A549 (cell line): ENCODE measurements at regions of chr2 and their contacts with region 1.

Region 1: DNA sequence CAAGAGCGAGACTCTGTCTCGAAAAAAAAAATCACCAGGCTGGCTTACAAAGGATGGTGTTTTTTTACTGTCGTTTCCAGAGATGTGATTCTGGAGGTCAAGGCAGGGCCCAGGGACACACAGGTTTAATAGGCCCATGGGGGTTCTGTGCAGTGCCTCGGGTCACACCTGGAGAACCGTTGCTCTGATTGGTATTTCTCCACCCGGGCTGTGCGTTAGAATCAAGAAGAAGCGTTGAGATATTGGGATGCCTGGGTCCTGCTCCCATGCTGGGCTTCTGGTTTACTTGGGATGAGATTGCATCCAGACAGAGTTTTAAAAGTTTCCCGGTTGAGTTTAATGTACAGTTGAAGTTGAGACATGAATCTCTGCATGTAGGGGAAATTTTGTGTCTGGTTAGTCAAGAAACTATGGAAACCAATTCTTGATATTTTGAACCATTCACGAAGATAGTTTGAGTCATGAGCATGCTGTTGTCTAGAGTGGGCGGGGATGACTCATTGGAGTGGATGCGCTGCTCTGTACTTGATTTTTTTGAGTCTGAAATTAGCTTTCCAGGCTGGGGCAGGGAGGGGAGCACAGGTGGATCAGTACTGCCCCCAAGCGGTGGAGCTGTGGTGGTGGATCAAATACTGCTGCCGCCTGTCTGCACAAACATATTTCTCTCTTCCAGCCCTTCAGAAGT is 50.1 kb downstream of the GREB1 start:
- DNase-seq: peak; percentile 86 to 88
- ATAC-seq: peak; percentile 54 to 84
- H3K4me3 ChIP-seq: no peak overlapping the region
- H3K27ac ChIP-seq: peak overlapping the region; percentile 21 to 34; a peak in 4 of 6 replicates
- H3K4me1 ChIP-seq: peaks cover 21% of the 10 kb centered on the region
- CTCF ChIP-seq: peak; percentile 96
- EP300 ChIP-seq: no peak
- POLR2A ChIP-seq: no peak
- RAD21 ChIP-seq: peak; percentile 96 to 98

Region 2: GRCh38 chr2:10844097-10844496 is 739.9 kb before region 1 on chr2:
- CTCF ChIA-PET with region 1: interaction called, 10 read pairs
- POLR2A ChIA-PET with region 1: no interaction called
- DNase-seq: peak in 1 of 2 experiments; percentile 52
- ATAC-seq: peak; percentile 70 to 93; a peak in 5 of 6 replicates
- H3K4me3 ChIP-seq: no peak overlapping the region
- H3K27ac ChIP-seq: no peak overlapping the region; a peak in 1 of 6 replicates
- H3K4me1 ChIP-seq: peaks cover 9% of the 10 kb centered on the region; the same call in 1 of the 3 replicates
- CTCF ChIP-seq: no peak
- EP300 ChIP-seq: no peak
- POLR2A ChIP-seq: no peak
- RAD21 ChIP-seq: no peak

Region 3: GRCh38 chr2:11160731-11161455 is 423.1 kb before region 1 on chr2:
- CTCF ChIA-PET with region 1: interaction called, 11 read pairs
- POLR2A ChIA-PET with region 1: no interaction called
- DNase-seq: no peak
- ATAC-seq: no peak
- H3K4me3 ChIP-seq: no peak overlapping the region
- H3K27ac ChIP-seq: no peak overlapping the region
- H3K4me1 ChIP-seq: peaks cover 8% of the 10 kb centered on the region; the same call in 2 of the 3 replicates
- CTCF ChIP-seq: no peak
- EP300 ChIP-seq: no peak
- POLR2A ChIP-seq: no peak
- RAD21 ChIP-seq: no peak

Region 4: DNA sequence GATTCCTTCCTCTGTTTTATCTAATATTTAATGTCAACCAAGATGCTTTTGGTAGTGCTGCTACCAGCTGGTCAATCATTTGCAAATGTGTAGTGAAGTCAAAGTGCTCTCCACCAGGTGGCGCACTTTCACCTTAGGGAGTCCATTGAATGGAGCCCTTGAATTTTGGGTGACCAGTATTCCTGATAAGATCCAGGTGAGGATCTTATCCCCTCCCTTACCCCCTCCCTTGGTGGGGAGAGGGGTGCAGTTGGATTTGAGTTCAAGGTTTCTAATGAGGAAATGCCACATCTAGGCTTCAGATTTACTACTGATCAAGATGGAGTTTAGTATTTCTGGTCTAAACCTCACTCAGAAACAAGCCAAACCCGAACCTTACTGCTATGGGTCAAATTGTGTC is 106.0 kb before region 1 on chr2:
- CTCF ChIA-PET with region 1: interaction called, 350 read pairs
- POLR2A ChIA-PET with region 1: interaction called, 3 read pairs
- DNase-seq: peak; percentile 73 to 91
- ATAC-seq: peak; percentile 72 to 86
- H3K4me3 ChIP-seq: no peak overlapping the region
- H3K27ac ChIP-seq: no peak overlapping the region
- H3K4me1 ChIP-seq: no peaks in the 10 kb centered on the region
- CTCF ChIP-seq: peak; percentile 99
- EP300 ChIP-seq: no peak
- POLR2A ChIP-seq: no peak
- RAD21 ChIP-seq: peak; percentile 87 to 88

Region 5: DNA sequence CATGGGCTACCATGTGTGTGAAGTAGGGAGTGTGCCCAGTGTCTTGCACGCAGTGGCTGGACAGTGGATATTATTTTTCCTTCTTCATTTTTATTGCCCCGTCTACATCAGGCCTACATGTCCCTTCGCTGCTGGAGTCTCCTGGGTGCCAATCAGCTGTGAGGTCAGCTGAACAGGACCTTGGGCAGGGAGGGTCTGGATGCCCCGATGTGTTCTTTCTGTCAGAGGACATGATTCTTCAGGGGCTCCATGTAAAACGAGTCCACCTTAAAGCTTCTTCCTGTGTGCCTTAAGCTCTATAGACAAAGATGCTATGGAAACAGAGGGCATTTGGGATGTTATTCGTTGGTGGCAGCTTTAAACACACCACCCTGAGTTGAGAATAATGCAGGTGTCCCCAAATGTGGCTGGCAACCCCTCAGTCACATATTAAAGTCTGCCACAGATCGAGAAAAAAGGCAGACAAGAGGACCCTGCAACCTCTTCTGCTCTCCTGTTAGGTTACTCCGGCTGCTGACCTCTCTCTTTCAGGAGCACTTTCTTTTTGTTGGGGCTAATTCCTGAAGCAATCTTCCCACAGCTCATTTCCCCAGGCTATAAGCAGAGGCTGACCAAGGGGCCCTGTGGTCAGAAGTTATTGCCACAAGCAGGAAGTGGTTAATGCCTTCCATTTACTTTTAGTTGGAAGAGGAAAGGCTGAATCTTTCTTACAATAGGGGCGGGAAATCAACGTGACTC is 30.2 kb before region 1 on chr2:
- CTCF ChIA-PET with region 1: interaction called, 261 read pairs
- POLR2A ChIA-PET with region 1: no interaction called
- DNase-seq: no peak
- ATAC-seq: no peak
- H3K4me3 ChIP-seq: no peak overlapping the region
- H3K27ac ChIP-seq: no peak overlapping the region
- H3K4me1 ChIP-seq: no peaks in the 10 kb centered on the region
- CTCF ChIP-seq: no peak
- EP300 ChIP-seq: no peak
- POLR2A ChIP-seq: no peak
- RAD21 ChIP-seq: no peak

Region 6: DNA sequence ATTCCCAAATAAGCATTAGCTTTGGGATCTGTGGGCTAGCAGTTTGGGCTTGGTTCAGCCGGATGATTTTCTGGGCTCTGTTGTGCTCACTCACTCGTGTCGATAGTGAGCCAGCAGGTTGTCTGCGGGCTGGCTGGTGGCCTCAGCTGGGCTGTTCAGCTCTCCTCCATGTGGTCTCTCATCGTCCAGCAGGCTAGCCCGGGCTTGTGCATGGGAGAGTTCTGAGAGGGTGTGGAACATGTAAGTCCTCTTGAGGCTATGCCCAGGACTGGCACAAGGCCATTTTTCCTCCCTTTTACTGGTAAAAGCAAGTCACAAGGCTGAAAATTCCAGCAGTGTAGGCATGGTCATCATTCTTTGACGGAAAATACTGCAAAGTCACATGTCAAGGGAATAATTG is 47.5 kb after region 1 on chr2:
- CTCF ChIA-PET with region 1: interaction called, 20 read pairs
- POLR2A ChIA-PET with region 1: no interaction called
- DNase-seq: peak in 1 of 2 experiments; percentile 12
- ATAC-seq: no peak
- H3K4me3 ChIP-seq: no peak overlapping the region
- H3K27ac ChIP-seq: no peak overlapping the region
- H3K4me1 ChIP-seq: no peaks in the 10 kb centered on the region
- CTCF ChIP-seq: no peak
- EP300 ChIP-seq: no peak
- POLR2A ChIP-seq: no peak
- RAD21 ChIP-seq: no peak